PC-9 (cell line): ENCODE measurements at regions of chr20 and their contacts with region 1.

Region 1: DNA sequence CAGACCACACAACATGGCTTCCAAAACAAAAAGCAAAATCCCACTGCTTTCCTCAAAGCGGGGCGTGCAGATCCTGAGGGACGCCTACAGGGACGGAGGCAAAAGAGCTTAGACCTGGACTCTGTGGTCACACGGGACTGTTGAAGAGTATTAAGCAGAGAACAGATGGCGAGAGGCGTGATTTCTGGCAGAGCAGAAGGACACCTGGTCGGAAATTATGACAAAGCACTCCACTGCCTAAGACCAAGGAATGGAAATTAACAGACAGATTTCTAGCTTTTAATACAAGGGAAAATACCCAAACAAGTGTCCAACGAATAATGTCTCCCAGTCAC is 15.4 kb downstream of the CST7 start:
- DNase-seq: no peak
- H3K4me3 ChIP-seq: no peak overlapping the region
- H3K27ac ChIP-seq: no peak overlapping the region
- H3K4me1 ChIP-seq: no peaks in the 10 kb centered on the region
- H3K27me3 ChIP-seq: no peaks in the 10 kb centered on the region
- CTCF ChIP-seq: no peak

Region 2: DNA sequence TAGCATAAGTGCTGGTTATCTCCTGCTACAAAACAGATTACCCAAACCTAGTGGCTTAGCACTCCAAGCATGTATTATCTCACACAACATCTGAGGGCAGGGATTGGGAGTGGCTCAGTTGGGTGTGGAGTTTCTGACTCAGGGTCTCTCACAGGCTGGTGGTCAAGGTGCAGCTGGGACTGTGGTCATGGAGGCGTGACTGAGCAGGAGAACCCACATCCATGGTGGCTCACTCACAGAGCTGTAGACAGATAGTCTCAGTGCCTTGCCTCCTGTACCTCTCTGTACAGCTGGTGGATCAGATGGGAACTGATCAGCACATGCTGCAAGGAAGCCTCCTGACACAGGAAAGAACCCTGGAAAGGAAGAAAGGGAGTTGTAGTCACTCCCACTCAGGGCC is 98.5 kb before region 1 on chr20:
- CTCF ChIA-PET with region 1: no interaction called
- POLR2A ChIA-PET with region 1: no interaction called
- intact Hi-C with region 1: loop called (anchors 5 kb)
- DNase-seq: no peak
- H3K4me3 ChIP-seq: no peak overlapping the region
- H3K27ac ChIP-seq: no peak overlapping the region
- H3K4me1 ChIP-seq: 0 out of 2 replicates have a peak, but pooled peaks cover 5% of the 10 kb centered on the region
- H3K27me3 ChIP-seq: no peaks in the 10 kb centered on the region
- CTCF ChIP-seq: no peak

Region 3: GRCh38 chr20:25129908-25130307 is 165.4 kb after region 1 on chr20:
- CTCF ChIA-PET with region 1: no interaction called
- POLR2A ChIA-PET with region 1: no interaction called
- intact Hi-C with region 1: no loop called
- DNase-seq: no peak
- H3K4me3 ChIP-seq: no peak overlapping the region
- H3K27ac ChIP-seq: no peak overlapping the region
- H3K4me1 ChIP-seq: no peaks in the 10 kb centered on the region
- H3K27me3 ChIP-seq: no peaks in the 10 kb centered on the region
- CTCF ChIP-seq: no peak

Region 4: GRCh38 chr20:25418776-25419175 is 454.3 kb after region 1 on chr20:
- CTCF ChIA-PET with region 1: no interaction called
- POLR2A ChIA-PET with region 1: interaction called, 17 read pairs
- intact Hi-C with region 1: no loop called
- DNase-seq: peak in 1 of 2 experiments; percentile 50
- H3K4me3 ChIP-seq: no peak overlapping the region
- H3K27ac ChIP-seq: no peak overlapping the region
- H3K4me1 ChIP-seq: no peaks in the 10 kb centered on the region
- H3K27me3 ChIP-seq: no peaks in the 10 kb centered on the region
- CTCF ChIP-seq: no peak